Testis (tissue), 5 donors: ENCODE measurements at regions of chr3 and their contacts with region 1.

Region 1: GRCh38 chr3:135905058-135905724 is 60.3 kb upstream of the PPP2R3A start:
- DNase-seq: no peak
- H3K4me3 ChIP-seq: no peak overlapping the region
- H3K27ac ChIP-seq: no peak overlapping the region
- H3K4me1 ChIP-seq: no peaks in the 10 kb centered on the region
- H3K27me3 ChIP-seq: no peaks in the 10 kb centered on the region
- CTCF ChIP-seq: no peak
- POLR2A ChIP-seq: no peak

Region 2: GRCh38 chr3:135229018-135229495 is 676.1 kb before region 1 on chr3:
- intact Hi-C with region 1: no loop called
- DNase-seq: no peak
- H3K4me3 ChIP-seq: no peak overlapping the region
- H3K27ac ChIP-seq: no peak overlapping the region
- H3K4me1 ChIP-seq: no peaks in the 10 kb centered on the region
- H3K27me3 ChIP-seq: no peaks in the 10 kb centered on the region
- CTCF ChIP-seq: no peak
- POLR2A ChIP-seq: no peak

Region 3: DNA sequence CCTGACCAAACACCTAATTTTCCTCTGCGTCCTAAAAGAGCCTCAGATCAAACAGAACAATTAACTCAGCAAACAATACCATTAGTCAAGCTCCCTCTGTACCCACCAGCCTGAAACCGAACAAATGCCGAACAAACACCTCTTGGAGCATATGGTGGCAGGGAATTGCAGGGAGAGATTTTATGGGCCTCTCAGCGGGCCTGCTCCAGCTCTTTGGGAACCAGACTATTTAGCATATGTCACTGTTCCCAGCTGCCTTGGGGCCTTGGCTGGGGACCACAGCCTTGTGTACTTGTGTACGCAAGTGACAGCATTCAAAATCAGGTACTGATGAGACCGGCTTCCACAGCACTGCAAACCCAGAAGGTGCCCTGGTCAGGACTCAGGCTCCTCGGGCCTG is 328.4 kb before region 1 on chr3:
- intact Hi-C with region 1: no loop called
- DNase-seq: no peak
- H3K4me3 ChIP-seq: no peak overlapping the region
- H3K27ac ChIP-seq: no peak overlapping the region
- H3K4me1 ChIP-seq: no peaks in the 10 kb centered on the region
- H3K27me3 ChIP-seq: no peaks in the 10 kb centered on the region
- CTCF ChIP-seq: no peak
- POLR2A ChIP-seq: no peak

Region 4: DNA sequence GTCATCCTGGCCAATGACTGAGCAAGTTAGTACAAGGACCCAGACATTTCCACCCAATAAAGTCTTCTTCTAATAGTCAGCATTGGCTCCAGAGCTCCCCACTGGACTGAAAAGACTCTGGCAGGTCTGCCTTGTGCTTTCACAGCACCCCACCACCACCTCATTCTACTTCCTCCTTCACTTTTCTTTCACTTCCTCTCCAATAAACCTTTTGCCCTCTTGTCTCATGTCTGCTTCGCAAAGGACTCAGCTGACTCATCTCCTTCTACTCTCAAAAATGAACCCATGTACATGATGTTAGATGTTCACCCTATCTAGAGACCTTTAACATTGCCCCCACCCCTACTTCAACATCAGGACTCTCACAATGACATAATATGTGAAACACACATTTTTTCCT is 120.6 kb before region 1 on chr3:
- intact Hi-C with region 1: no loop called
- DNase-seq: no peak
- H3K4me3 ChIP-seq: no peak overlapping the region
- H3K27ac ChIP-seq: no peak overlapping the region
- H3K4me1 ChIP-seq: no peaks in the 10 kb centered on the region
- H3K27me3 ChIP-seq: no peaks in the 10 kb centered on the region
- CTCF ChIP-seq: no peak
- POLR2A ChIP-seq: no peak

Region 5: DNA sequence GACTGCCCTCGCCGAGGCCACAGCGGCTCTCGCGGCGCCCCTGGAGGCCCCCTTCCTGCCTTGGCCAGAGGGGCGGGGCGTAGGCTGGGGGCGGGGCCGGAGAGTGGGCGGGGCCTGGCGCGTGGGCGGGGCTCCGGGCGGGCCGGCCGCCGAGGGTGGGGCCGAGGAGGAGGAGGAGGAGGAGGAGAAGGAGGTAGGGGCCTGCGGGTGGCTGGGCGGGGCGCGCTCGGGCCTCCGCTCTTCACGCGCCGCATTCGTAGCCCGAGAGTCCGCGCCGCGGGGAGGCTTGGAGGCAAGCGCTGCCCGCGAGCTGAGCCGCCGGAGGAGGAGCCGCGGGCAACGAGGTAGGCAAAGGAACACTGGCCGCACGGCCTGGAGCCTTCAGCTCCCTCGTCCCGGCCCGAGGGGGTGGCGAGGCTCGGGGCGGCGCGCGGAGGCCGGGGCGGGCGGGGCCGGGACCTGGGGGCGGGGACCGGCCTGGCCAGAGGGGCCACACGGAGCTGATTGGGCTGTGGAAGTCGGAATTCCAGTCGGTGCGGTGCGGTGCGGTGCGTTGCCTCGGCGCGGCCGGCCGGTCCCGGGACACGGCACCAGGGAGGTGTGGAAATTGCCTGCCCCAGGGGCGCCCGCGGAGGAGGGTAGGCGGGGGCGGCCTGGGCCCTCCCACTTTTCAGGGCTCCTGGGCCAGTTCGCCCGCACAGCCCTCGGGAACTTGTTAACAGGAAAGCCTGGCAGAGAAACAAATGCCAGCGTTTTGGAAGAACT is 60.5 kb after region 1 on chr3 and contains the start of gene PPP2R3A:
- intact Hi-C with region 1: no loop called
- DNase-seq: peak; percentile 88
- H3K4me3 ChIP-seq: peak within 1 kb of the TSS; percentile 84 to 86
- H3K27ac ChIP-seq: peak within 1 kb of the TSS; percentile 95 to 97
- H3K4me1 ChIP-seq: peaks cover 36% of the 10 kb centered on the region
- H3K27me3 ChIP-seq: no peaks in the 10 kb centered on the region
- CTCF ChIP-seq: no peak
- POLR2A ChIP-seq: peak; percentile 29
- total RNA-seq, gene PPP2R3A: 35.4 to 41.7 TPM

Region 6: GRCh38 chr3:136042608-136043221 is 137.5 kb after region 1 on chr3:
- intact Hi-C with region 1: loop called (anchors 10 kb)
- DNase-seq: no peak
- H3K4me3 ChIP-seq: no peak overlapping the region
- H3K27ac ChIP-seq: no peak overlapping the region
- H3K4me1 ChIP-seq: no peaks in the 10 kb centered on the region
- H3K27me3 ChIP-seq: no peaks in the 10 kb centered on the region
- CTCF ChIP-seq: peak in 2 of 3 experiments; percentile 27 to 48
- POLR2A ChIP-seq: no peak